HEK293 (cell line): ENCODE measurements at regions of chr9 and their contacts with region 1.

Region 1: GRCh38 chr9:3441197-3441816 is 84.5 kb downstream of the RFX3 start:
- H3K4me3 ChIP-seq: no peak overlapping the region
- H3K27ac ChIP-seq: no peak overlapping the region
- H3K4me1 ChIP-seq: no peaks in the 10 kb centered on the region; the same call in 1 of the 2 replicates
- CTCF ChIP-seq: no peak

Region 2: DNA sequence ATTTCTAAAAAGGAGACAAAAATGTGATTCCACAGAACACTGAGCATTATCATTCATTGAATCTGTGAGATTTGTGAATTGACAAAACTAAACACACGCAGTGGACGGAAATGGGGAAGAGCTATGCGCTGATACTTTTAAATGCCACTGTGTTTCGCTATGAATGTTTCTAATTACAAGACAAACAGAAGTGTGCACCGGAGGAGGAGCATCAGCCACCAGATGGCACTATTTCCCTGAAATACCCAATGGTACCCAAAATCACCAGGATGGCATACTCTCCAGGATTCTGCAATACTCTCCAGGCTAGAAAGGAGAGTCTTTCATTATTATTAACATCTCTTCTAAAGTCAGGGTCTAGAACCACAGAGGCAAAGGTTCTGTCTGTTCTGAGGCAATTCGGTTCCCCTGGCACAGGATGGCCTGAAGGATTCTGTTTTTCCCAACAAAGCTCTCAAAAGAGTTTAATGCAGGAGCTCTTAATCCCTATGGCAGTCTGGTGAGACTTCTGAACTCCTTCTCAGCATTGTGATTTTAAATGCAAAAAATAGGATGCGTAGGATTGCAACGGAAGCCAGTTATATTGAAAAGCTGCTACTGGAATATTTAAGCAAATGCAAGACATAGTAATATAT is 583.6 kb before region 1 on chr9:
- CTCF ChIA-PET with region 1: interaction called, 16 read pairs
- POLR2A ChIA-PET with region 1: no interaction called
- H3K4me3 ChIP-seq: no peak overlapping the region
- H3K27ac ChIP-seq: no peak overlapping the region
- H3K4me1 ChIP-seq: no peaks in the 10 kb centered on the region
- CTCF ChIP-seq: peak; percentile 42; the same call in 1 of the 2 replicates

Region 3: GRCh38 chr9:3240656-3241268 is 200.5 kb before region 1 on chr9:
- CTCF ChIA-PET with region 1: interaction called, 29 read pairs
- POLR2A ChIA-PET with region 1: no interaction called
- H3K4me3 ChIP-seq: no peak overlapping the region
- H3K27ac ChIP-seq: no peak overlapping the region
- H3K4me1 ChIP-seq: no peaks in the 10 kb centered on the region
- CTCF ChIP-seq: peak; percentile 48; the same call in 1 of the 2 replicates

Region 4: GRCh38 chr9:3331817-3332216 is 109.5 kb before region 1 on chr9:
- CTCF ChIA-PET with region 1: interaction called, 42 read pairs
- POLR2A ChIA-PET with region 1: no interaction called
- H3K4me3 ChIP-seq: no peak overlapping the region
- H3K27ac ChIP-seq: no peak overlapping the region
- H3K4me1 ChIP-seq: no peaks in the 10 kb centered on the region
- CTCF ChIP-seq: no peak

Region 5: GRCh38 chr9:3451956-3452355 is 10.6 kb after region 1 on chr9:
- CTCF ChIA-PET with region 1: interaction called, 27 read pairs
- POLR2A ChIA-PET with region 1: no interaction called
- H3K4me3 ChIP-seq: no peak overlapping the region
- H3K27ac ChIP-seq: no peak overlapping the region
- H3K4me1 ChIP-seq: no peaks in the 10 kb centered on the region
- CTCF ChIP-seq: no peak

Region 6: DNA sequence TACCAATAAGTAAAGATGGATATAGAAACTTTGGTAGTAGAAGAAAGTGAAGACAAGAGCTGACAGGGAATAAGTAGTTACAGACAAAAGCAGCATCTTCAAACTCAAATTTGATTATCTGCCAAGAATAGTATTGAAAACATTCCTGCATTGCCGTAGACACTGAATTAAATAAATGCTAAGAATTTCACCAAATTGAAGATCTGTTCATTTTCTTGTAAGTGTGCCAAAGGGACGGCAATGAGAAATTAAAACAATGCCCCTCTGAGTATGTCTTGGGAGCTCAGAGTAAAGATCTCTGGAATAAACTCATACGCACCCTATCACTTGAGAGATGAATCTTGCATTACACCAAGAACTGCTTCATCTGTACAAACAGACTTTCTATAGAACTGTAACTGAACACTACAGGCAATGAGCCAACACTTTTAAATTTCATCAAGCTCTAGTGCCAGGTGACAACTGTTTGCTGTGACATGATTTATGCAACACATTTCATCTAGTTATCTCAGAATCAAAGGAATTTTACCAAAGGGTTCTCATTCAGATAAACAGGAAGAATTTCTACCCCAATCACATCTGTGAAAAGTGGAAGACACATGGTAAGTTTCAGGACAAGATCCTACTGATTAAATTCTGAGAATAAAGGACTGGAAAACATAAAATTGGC is 17.6 kb after region 1 on chr9:
- CTCF ChIA-PET with region 1: interaction called, 27 read pairs
- POLR2A ChIA-PET with region 1: no interaction called
- H3K4me3 ChIP-seq: no peak overlapping the region
- H3K27ac ChIP-seq: no peak overlapping the region
- H3K4me1 ChIP-seq: no peaks in the 10 kb centered on the region
- CTCF ChIP-seq: no peak

Region 7: DNA sequence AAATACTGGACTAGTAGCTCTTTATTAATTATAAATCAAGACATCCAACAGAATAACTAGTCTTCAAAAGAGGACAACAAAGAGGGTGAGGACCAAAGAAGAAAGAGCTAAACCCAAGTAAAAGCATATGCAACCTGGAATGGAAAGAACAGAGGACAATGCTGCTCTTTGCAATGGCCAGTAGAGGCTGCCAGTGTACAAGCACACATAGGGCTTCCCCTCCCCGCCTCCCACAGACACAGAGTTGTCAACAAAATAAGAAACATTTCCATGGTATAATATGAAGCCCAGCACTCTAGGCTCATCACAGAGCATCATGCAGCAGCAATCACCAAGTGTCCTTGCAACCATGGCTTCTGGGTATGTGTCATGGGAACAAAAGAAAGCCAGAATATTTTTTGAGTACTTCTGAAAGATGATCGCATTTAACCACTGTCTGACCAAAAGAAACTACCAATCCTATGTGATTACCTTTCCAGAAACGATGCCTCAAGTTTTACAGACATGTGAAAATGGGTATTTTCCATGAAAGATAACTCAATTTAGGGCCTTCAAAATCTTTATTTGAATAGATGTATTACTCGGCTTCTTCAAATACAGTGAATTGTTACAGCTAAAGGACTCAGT is 26.4 kb after region 1 on chr9:
- CTCF ChIA-PET with region 1: interaction called, 16 read pairs
- POLR2A ChIA-PET with region 1: no interaction called
- H3K4me3 ChIP-seq: no peak overlapping the region
- H3K27ac ChIP-seq: no peak overlapping the region
- H3K4me1 ChIP-seq: peaks cover 4% of the 10 kb centered on the region; the same call in 1 of the 2 replicates
- CTCF ChIP-seq: peak; percentile 54; the same call in 1 of the 2 replicates